Gastrocnemius medialis (tissue), 4 donors: ENCODE measurements at regions of chr16 and their contacts with region 1.

Region 1: DNA sequence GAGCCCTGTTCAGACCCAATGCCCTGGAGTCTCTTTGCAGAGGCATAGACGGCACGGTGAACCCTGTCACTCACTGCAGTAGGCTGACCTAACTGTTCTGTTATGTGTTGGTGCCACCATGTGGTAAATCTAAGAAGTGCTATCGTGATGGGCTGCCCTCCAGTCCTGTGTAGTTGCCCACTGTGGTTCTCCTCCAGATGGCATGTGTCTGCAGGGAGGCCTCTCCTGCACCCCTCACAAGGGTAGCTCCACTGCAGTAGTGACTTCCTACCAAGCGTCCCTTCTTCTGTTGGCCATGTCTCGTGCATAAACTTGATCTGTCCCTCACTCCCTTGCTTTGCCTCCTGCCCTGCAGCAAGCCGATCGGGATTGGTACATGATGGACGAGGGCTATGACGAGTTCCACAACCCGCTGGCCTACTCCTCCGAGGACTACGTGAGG is 5.8 kb downstream of the DHX38 start:
- DNase-seq: peak in 1 of 2 donors; percentile 36
- ATAC-seq: peak; percentile 82 to 91
- H3K4me3 ChIP-seq: no peak overlapping the region
- H3K27ac ChIP-seq: no peak overlapping the region
- H3K4me1 ChIP-seq: peaks cover 14 to 15% of the 10 kb centered on the region in 2 donors
- H3K27me3 ChIP-seq: no peaks in the 10 kb centered on the region
- CTCF ChIP-seq: peak; percentile 39 to 60 (median 53)
- POLR2A ChIP-seq: no peak

Region 2: GRCh38 chr16:72066747-72067146 is 32.7 kb before region 1 on chr16:
- in situ Hi-C with region 1: no loop called
- intact Hi-C with region 1: loop called (anchors 1 kb)
- DNase-seq: no peak
- ATAC-seq: peak; percentile 69 to 75
- H3K4me3 ChIP-seq: no peak overlapping the region
- H3K27ac ChIP-seq: no peak overlapping the region
- H3K4me1 ChIP-seq: peaks cover 0 to 5% of the 10 kb centered on the region in 2 donors
- H3K27me3 ChIP-seq: no peaks in the 10 kb centered on the region
- CTCF ChIP-seq: peak; percentile 18 to 50 (median 28)
- POLR2A ChIP-seq: no peak